ENCODE measurements at regions of chr9 and their contacts with region 1.

Region 1: GRCh38 chr9:111700776-111701175 is 39.4 kb downstream of the GNG10 start:
- DNase-seq: peak; percentile 75
- H3K4me3 ChIP-seq: no peak overlapping the region
- H3K27ac ChIP-seq: peak overlapping the region; percentile 83
- H3K4me1 ChIP-seq: peaks cover 14% of the 10 kb centered on the region
- H3K27me3 ChIP-seq: no peaks in the 10 kb centered on the region
- CTCF ChIP-seq: no peak
- POLR2A ChIP-seq: no peak

Region 2: GRCh38 chr9:111559000-111559610 is 141.7 kb before region 1 on chr9:
- CTCF ChIA-PET with region 1: no interaction called
- POLR2A ChIA-PET with region 1: no interaction called
- dilution Hi-C with region 1: no loop called
- intact Hi-C with region 1: no loop called
- DNase-seq: no peak
- H3K4me3 ChIP-seq: no peak overlapping the region
- H3K27ac ChIP-seq: no peak overlapping the region
- H3K4me1 ChIP-seq: no peaks in the 10 kb centered on the region
- H3K27me3 ChIP-seq: no peaks in the 10 kb centered on the region
- CTCF ChIP-seq: no peak
- POLR2A ChIP-seq: no peak

Region 3: GRCh38 chr9:111683392-111683791 is 17.4 kb before region 1 on chr9:
- CTCF ChIA-PET with region 1: interaction called, 8 read pairs
- POLR2A ChIA-PET with region 1: no interaction called
- dilution Hi-C with region 1: no loop called
- intact Hi-C with region 1: loop called (anchors 1 kb)
- DNase-seq: no peak
- H3K4me3 ChIP-seq: no peak overlapping the region
- H3K27ac ChIP-seq: no peak overlapping the region
- H3K4me1 ChIP-seq: no peaks in the 10 kb centered on the region
- H3K27me3 ChIP-seq: no peaks in the 10 kb centered on the region
- CTCF ChIP-seq: no peak
- POLR2A ChIP-seq: no peak